Activated B cell treated with CpG ODN at 0.5 μM for 24 hours (primary cell): ENCODE measurements at regions of chr22 and their contacts with region 1.

Region 1: DNA sequence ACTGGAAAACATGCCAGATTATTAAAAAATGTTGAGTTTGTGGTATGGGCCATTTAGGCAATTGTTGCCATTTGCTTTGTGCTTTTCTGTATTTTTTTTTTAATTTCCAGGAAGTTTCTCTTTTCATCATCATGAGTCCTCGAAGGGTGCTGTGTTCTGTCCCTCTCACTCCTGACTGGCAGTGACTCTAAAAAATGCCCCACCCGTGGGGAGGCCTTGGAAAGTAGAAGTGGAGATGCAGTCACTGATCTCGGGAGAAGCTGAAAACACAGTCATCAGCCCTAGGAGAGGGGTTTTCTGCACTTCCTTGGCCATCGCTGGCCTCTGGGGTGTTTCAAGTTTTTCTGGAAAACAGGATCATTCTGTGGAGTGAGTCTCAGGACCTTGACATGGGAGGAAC is 98.5 kb upstream of the GRK3 start:
- DNase-seq: no peak
- ATAC-seq: no peak
- H3K4me3 Mint-ChIP-seq: no peak overlapping the region
- H3K27ac Mint-ChIP-seq: no peak overlapping the region
- H3K4me1 Mint-ChIP-seq: no peaks in the 10 kb centered on the region
- H3K27me3 Mint-ChIP-seq: no peaks in the 10 kb centered on the region
- CTCF ChIP-seq: no peak

Region 2: GRCh38 chr22:25488244-25489020 is 22.5 kb after region 1 on chr22:
- CTCF ChIA-PET with region 1: no interaction called
- POLR2A ChIA-PET with region 1: no interaction called
- intact Hi-C with region 1: no loop called
- DNase-seq: no peak
- ATAC-seq: no peak
- H3K4me3 Mint-ChIP-seq: no peak overlapping the region
- H3K27ac Mint-ChIP-seq: no peak overlapping the region
- H3K4me1 Mint-ChIP-seq: no peaks in the 10 kb centered on the region
- H3K27me3 Mint-ChIP-seq: no peaks in the 10 kb centered on the region
- CTCF ChIP-seq: no peak

Region 3: GRCh38 chr22:25509374-25509791 is 43.4 kb after region 1 on chr22:
- CTCF ChIA-PET with region 1: no interaction called
- POLR2A ChIA-PET with region 1: no interaction called
- intact Hi-C with region 1: no loop called
- DNase-seq: no peak
- ATAC-seq: no peak
- H3K4me3 Mint-ChIP-seq: no peak overlapping the region
- H3K27ac Mint-ChIP-seq: no peak overlapping the region
- H3K4me1 Mint-ChIP-seq: no peaks in the 10 kb centered on the region
- H3K27me3 Mint-ChIP-seq: no peaks in the 10 kb centered on the region
- CTCF ChIP-seq: no peak

Region 4: GRCh38 chr22:25540166-25540907 is 74.4 kb after region 1 on chr22:
- CTCF ChIA-PET with region 1: interaction called, 15 read pairs
- POLR2A ChIA-PET with region 1: no interaction called
- intact Hi-C with region 1: loop called (anchors 5 kb)
- DNase-seq: no peak
- ATAC-seq: no peak
- H3K4me3 Mint-ChIP-seq: no peak overlapping the region
- H3K27ac Mint-ChIP-seq: no peak overlapping the region
- H3K4me1 Mint-ChIP-seq: peaks cover 15% of the 10 kb centered on the region
- H3K27me3 Mint-ChIP-seq: no peaks in the 10 kb centered on the region
- CTCF ChIP-seq: no peak

Region 5: DNA sequence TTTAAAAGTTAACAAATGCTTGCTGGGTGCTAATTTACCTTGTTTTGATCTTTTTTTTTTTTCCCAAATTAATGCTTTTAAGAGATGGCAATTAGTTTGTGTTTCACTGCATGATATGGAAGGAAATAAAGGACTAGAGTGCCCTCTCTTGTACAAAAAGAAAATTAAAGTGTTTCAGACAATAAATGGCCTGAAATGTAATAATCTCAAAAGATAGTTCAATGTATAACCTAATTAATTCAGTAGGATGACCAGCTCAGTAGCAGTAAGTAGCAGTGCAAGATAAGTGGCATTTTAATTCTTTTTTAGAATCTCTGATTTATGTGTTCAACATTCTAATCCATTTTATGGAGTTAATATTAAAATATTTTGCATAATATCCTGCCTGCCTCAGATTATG is 236.1 kb after region 1 on chr22:
- CTCF ChIA-PET with region 1: interaction called, 29 read pairs
- POLR2A ChIA-PET with region 1: no interaction called
- intact Hi-C with region 1: loop called (anchors 1 kb)
- DNase-seq: no peak
- ATAC-seq: no peak
- H3K4me3 Mint-ChIP-seq: no peak overlapping the region
- H3K27ac Mint-ChIP-seq: no peak overlapping the region
- H3K4me1 Mint-ChIP-seq: peaks cover 9% of the 10 kb centered on the region
- H3K27me3 Mint-ChIP-seq: no peaks in the 10 kb centered on the region
- CTCF ChIP-seq: no peak

Region 6: GRCh38 chr22:25772288-25772687 is 306.3 kb after region 1 on chr22:
- CTCF ChIA-PET with region 1: interaction called, 32 read pairs
- POLR2A ChIA-PET with region 1: no interaction called
- intact Hi-C with region 1: loop called (anchors 1 kb)
- DNase-seq: no peak
- ATAC-seq: no peak
- H3K4me3 Mint-ChIP-seq: no peak overlapping the region
- H3K27ac Mint-ChIP-seq: no peak overlapping the region
- H3K4me1 Mint-ChIP-seq: peaks cover 12% of the 10 kb centered on the region
- H3K27me3 Mint-ChIP-seq: peaks cover 2% of the 10 kb centered on the region
- CTCF ChIP-seq: no peak

Region 7: GRCh38 chr22:25777870-25778269 is 311.9 kb after region 1 on chr22:
- CTCF ChIA-PET with region 1: interaction called, 32 read pairs
- POLR2A ChIA-PET with region 1: no interaction called
- intact Hi-C with region 1: loop called (anchors 1 kb)
- DNase-seq: no peak
- ATAC-seq: no peak
- H3K4me3 Mint-ChIP-seq: no peak overlapping the region
- H3K27ac Mint-ChIP-seq: no peak overlapping the region
- H3K4me1 Mint-ChIP-seq: peaks cover 3% of the 10 kb centered on the region
- H3K27me3 Mint-ChIP-seq: peaks cover 6% of the 10 kb centered on the region
- CTCF ChIP-seq: no peak

Region 8: DNA sequence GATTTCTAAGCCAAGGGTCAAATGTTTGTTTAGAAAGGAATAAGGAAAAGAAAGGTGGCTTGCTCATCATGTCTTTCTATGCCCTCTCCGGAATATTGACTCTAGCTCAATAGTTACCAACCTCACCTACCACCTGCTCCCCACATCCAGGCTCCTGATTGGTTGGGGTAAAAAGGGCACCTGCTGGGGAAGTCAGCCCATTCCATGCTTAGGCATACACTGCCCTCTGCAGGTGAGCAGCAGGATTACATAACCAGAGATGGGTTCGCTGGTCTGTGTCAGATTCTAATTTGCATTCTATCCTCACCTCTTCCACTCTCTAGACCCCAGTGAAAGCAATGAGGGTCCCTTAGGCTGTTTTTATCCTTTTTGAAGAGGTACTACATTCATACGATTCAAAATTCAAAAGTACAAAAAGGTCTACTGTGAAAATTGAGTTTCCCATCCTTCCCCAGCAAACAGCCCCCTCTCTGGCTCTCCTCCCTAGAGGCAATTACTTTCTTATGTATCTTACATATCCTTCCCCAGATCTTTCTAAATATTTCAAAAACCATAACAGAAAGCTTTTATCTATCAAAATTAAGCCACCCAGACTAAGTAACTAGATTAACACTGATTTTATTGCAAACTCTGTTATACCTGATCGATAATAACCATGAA is 865.1 kb after region 1 on chr22:
- CTCF ChIA-PET with region 1: interaction called, 5 read pairs
- POLR2A ChIA-PET with region 1: no interaction called
- intact Hi-C with region 1: loop called (anchors 1 kb)
- DNase-seq: peak; percentile 20
- ATAC-seq: peak; percentile 70
- H3K4me3 Mint-ChIP-seq: no peak overlapping the region
- H3K27ac Mint-ChIP-seq: no peak overlapping the region
- H3K4me1 Mint-ChIP-seq: peaks cover 1% of the 10 kb centered on the region
- H3K27me3 Mint-ChIP-seq: peaks cover 16% of the 10 kb centered on the region
- CTCF ChIP-seq: no peak

Region 9: GRCh38 chr22:26364066-26365015 is 898.4 kb after region 1 on chr22:
- CTCF ChIA-PET with region 1: interaction called, 3 read pairs
- POLR2A ChIA-PET with region 1: no interaction called
- intact Hi-C with region 1: loop called (anchors 1 kb)
- DNase-seq: no peak
- ATAC-seq: peak; percentile 81
- H3K4me3 Mint-ChIP-seq: no peak overlapping the region
- H3K27ac Mint-ChIP-seq: no peak overlapping the region
- H3K4me1 Mint-ChIP-seq: peaks cover 7% of the 10 kb centered on the region
- H3K27me3 Mint-ChIP-seq: peaks cover 17% of the 10 kb centered on the region
- CTCF ChIP-seq: no peak